Naive thymus-derived CD4-positive, alpha-beta T cell (primary cell): ENCODE measurements at regions of chr16 and their contacts with region 1.

Region 1: DNA sequence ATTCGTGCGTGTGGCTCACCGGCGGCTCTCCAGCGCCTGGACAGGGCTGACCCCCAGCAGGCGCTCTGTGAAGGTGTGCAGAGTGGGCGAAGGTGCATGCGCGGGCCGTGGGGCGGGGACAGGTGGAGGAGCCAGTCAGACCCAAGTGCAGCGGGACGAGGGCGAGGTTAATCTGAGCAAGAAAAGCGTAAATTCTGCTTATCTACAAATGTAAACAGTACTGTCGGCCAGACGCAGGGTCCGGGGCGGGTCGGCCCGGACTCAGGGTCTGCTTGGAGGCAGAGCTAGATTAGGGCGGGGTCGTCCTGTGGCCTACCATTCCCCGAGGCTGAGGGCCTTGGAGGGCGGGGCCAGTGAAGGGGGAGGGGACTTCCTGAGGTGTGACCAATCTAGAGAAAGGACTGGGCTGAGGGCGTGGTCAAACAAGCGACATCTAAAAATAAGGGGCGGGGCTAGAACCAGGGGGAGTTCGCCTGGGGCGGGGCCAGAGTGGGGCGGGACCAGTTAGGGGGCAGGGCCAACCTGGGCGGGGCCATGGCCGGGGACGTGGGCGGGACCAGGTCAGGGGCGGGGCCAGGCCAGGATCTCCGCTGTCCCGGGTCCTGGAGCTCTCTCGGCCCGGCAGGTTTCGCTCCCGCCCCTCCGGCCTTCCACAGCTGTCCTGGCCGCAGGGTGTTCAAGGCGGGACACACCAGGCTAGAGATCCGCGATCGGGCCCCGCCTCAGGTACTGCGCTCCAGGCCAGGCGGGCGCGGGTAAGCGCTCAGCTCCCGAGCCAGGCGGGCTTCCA is at the start of gene SEC14L5:
- DNase-seq: peak; percentile 87 to 96 (median 89)
- ATAC-seq: peak; percentile 99
- H3K4me3 ChIP-seq: peak within 1 kb of the TSS; percentile 59
- H3K4me3 Mint-ChIP-seq: peak within 1 kb of the TSS; percentile 79 to 96 (median 89)
- H3K27ac ChIP-seq: peak within 1 kb of the TSS; percentile 26
- H3K27ac Mint-ChIP-seq: peak within 1 kb of the TSS in 6 of 9 donors; percentile 30 to 80 (median 53)
- H3K4me1 ChIP-seq: peaks cover 6 to 13% of the 10 kb centered on the region in 2 donors
- H3K4me1 Mint-ChIP-seq: peaks cover 15 to 30% (median 23%) of the 10 kb centered on the region in 7 donors
- H3K27me3 ChIP-seq: peaks cover 0 to 7% of the 10 kb centered on the region in 2 donors
- H3K27me3 Mint-ChIP-seq: peaks cover 10 to 35% (median 31%) of the 10 kb centered on the region in 5 donors
- total RNA-seq, gene SEC14L5: 0.21 to 1.0 TPM in 2 of 5 experiments, not detected in the others

Region 2: GRCh38 chr16:3961449-3961849 is 996.5 kb before region 1 on chr16:
- CTCF ChIA-PET with region 1: no interaction called
- POLR2A ChIA-PET with region 1: no interaction called
- intact Hi-C with region 1: loop called in 1 of 2 experiments (anchors 10 kb)
- DNase-seq: no peak
- ATAC-seq: no peak
- H3K4me3 ChIP-seq: no peak overlapping the region
- H3K4me3 Mint-ChIP-seq: peak overlapping the region in 7 of 10 donors; percentile 2 to 94 (median 74)
- H3K27ac ChIP-seq: no peak overlapping the region
- H3K27ac Mint-ChIP-seq: peak overlapping the region in 5 of 9 donors; percentile 66 to 98 (median 95)
- H3K4me1 ChIP-seq: peaks cover 15 to 23% of the 10 kb centered on the region in 2 donors
- H3K4me1 Mint-ChIP-seq: peaks cover 9 to 34% (median 24%) of the 10 kb centered on the region in 7 donors
- H3K27me3 ChIP-seq: peaks cover 0 to 2% of the 10 kb centered on the region in 2 donors
- H3K27me3 Mint-ChIP-seq: peaks cover 0 to 15% (median 5%) of the 10 kb centered on the region in 5 donors

Region 3: DNA sequence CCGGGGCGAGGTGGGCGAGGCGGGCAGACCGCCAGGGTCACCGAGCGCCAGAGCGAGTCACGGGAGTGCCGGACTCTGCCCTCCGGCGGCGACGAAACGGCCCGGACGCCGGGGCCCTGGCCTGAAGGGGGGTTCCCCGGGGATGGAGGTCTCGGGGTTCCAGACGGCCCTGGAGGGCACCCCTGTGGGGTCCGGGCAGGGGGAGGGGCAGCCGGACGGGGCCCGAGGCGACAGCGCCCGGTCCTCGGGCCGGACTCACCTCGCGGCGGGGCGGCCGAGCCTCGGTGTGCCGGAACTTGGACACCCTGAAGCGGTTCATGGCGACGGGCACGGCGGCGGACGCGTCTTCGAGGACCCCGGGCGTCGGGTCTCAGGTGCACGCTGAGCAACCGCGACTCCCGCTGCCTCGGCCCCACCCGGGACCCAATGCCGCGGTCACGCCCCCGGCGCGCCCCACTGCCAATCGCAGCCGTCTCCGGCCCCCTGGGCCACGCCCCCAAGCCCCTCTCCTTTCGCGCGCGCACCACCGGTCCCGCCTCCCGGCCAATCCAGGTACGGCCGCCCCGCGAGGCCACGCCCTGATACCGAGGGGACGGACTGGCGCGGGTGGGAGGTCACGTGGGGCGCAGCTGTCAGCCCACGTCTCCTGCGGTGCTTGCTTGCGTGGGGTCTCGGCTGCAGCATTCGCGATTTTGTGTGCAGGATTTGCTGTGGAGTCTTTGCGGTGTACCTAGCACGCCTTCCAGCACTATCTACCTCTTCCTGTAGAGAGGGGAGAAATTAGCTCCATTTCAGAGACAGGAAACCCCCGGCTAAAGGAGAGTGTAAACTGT is 541.5 kb before region 1 on chr16 and contains the start of gene CORO7:
- CTCF ChIA-PET with region 1: no interaction called
- POLR2A ChIA-PET with region 1: no interaction called
- intact Hi-C with region 1: loop called (anchors 5 to 10 kb)
- DNase-seq: peak; percentile 98 to 100 (median 99)
- ATAC-seq: peak; percentile 89
- H3K4me3 ChIP-seq: peak within 1 kb of the TSS; percentile 71
- H3K4me3 Mint-ChIP-seq: peak within 1 kb of the TSS; percentile 88 to 98 (median 95)
- H3K27ac ChIP-seq: peak within 1 kb of the TSS; percentile 98
- H3K27ac Mint-ChIP-seq: peak within 1 kb of the TSS; percentile 91 to 99 (median 98)
- H3K4me1 ChIP-seq: peaks cover 26 to 33% of the 10 kb centered on the region in 2 donors
- H3K4me1 Mint-ChIP-seq: peaks cover 18 to 43% (median 38%) of the 10 kb centered on the region in 7 donors
- H3K27me3 ChIP-seq: no peaks in the 10 kb centered on the region
- H3K27me3 Mint-ChIP-seq: peaks cover 0 to 9% (median 0%) of the 10 kb centered on the region in 5 donors
- total RNA-seq, gene CORO7: 114 to 572 (median 165) TPM

Region 4: DNA sequence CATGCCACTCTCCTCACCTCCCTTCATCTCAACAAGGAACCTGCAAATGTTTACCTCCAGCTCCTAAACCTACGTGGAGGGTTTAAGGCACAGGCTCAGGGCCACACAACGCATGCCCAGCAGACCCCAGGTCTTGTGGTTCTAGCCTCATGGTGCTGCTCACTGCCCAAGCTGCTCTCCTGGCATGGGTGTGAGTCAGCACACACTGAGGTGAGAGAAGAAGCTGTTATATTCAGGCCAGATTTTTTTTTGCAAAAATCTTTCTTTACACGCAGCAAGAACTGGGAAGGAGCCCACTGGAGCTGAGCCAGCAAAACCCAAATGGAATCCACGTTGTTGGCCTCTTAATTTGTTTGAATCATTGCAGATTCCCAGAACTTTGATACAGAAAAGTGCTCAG is 407.3 kb before region 1 on chr16:
- CTCF ChIA-PET with region 1: no interaction called
- POLR2A ChIA-PET with region 1: no interaction called
- intact Hi-C with region 1: loop called in 1 of 2 experiments (anchors 1 kb)
- DNase-seq: no peak
- ATAC-seq: no peak
- H3K4me3 ChIP-seq: no peak overlapping the region
- H3K4me3 Mint-ChIP-seq: no peak overlapping the region
- H3K27ac ChIP-seq: no peak overlapping the region
- H3K27ac Mint-ChIP-seq: peak overlapping the region in 1 of 9 donors; percentile 36
- H3K4me1 ChIP-seq: peaks cover 0 to 7% of the 10 kb centered on the region in 2 donors
- H3K4me1 Mint-ChIP-seq: peaks cover 0 to 10% (median 5%) of the 10 kb centered on the region in 7 donors
- H3K27me3 ChIP-seq: no peaks in the 10 kb centered on the region
- H3K27me3 Mint-ChIP-seq: peaks cover 0 to 6% (median 0%) of the 10 kb centered on the region in 5 donors

Region 5: DNA sequence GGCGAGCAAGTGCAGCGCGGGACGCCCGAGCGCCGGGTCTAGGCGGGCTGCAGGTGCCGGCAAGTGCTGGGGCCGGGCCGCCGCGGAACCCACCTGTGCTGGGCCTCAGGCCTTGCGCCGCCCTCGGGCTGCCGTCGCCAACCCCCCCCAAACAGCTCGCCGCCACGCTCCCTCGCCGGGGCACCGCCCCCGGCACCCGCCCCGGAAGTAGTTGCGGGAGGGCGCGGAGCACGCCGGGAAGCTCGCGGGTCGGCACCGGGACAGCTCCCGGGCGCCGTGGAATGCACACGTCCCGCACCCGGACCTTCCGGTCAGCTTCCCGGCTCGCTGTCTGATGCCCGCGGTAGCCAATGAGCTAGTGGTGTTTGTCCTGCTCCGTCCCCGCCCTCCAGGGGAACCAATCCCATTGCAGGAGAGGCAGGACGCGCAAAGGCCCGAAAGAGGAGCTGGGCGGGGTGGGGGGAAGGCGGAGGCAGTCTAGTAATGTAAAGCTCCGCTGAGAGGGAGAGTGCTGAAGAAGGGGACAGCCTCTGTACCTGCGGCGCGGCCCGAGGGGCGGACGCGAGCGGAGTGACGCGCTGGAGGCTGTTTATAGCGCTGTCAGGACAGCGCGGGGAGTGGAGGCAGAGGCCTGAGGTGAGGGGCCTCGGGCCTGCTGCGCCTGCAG is 223.7 kb before region 1 on chr16 and contains the starts of genes ANKS3 and DNAAF8:
- CTCF ChIA-PET with region 1: no interaction called
- POLR2A ChIA-PET with region 1: no interaction called
- intact Hi-C with region 1: loop called in 1 of 2 experiments (anchors 1 kb)
- DNase-seq: peak; percentile 72 to 90 (median 79)
- ATAC-seq: peak; percentile 86
- H3K4me3 ChIP-seq: peak within 1 kb of the TSS; percentile 98
- H3K4me3 Mint-ChIP-seq: peak within 1 kb of the TSS; percentile 84 to 96 (median 92)
- H3K27ac ChIP-seq: peak within 1 kb of the TSS; percentile 79
- H3K27ac Mint-ChIP-seq: peak within 1 kb of the TSS; percentile 73 to 92 (median 90)
- H3K4me1 ChIP-seq: peaks cover 6 to 9% of the 10 kb centered on the region in 2 donors
- H3K4me1 Mint-ChIP-seq: peaks cover 9 to 32% (median 20%) of the 10 kb centered on the region in 7 donors
- H3K27me3 ChIP-seq: no peaks in the 10 kb centered on the region
- H3K27me3 Mint-ChIP-seq: peaks cover 0 to 3% (median 0%) of the 10 kb centered on the region in 5 donors
- total RNA-seq, gene ANKS3: 17.6 to 32.7 (median 25.3) TPM
- total RNA-seq, gene DNAAF8: 0.11 to 0.57 (median 0.27) TPM

Region 6: DNA sequence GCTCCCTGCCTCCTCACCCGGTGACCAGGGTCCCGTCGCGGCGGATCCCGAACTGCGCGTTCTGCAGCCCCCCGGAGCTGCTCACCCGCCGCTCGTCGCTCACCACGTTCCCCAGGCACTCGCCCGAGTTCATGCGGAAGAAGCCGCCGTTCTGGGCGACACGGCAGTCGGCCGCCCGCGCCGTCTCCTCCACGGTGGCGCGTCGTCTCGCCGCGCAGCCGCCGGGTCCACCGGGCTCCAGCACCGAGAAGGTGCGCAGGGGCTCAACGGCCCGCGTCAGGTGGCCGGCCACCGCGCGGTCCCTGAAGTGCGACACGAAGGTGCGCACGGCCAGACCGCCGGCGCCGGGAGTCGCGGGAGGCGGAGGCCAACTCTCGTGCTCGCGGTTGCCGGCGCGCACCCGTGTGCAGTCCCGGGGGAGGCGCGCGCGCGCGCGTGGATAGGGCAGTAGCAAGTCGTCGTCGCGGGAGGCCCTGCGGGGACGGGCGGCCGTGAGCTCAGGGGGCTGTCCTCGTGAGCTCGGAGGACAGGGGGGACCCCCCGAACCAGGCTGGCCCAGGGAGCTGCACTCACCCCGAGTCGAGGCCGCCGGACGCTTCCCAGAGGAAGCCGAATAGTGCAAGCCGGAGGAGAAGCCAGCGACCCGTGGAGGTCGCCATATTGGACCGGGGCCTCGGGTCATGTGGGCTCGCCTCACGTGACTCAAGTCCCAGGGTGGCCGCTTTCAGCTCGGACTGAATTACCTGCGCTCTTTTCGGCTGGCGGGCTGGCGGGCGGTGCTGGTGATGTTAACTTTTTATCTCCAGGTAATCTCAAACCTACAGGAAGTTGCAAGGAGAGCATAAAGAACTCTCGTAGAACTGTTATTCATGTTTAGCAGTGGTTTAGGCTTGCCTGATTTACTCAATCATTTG is 75.6 kb after region 1 on chr16 and contains the start of gene NAGPA:
- CTCF ChIA-PET with region 1: interaction called, 3 read pairs
- POLR2A ChIA-PET with region 1: no interaction called
- intact Hi-C with region 1: loop called in 1 of 2 experiments (anchors 1 kb)
- DNase-seq: peak; percentile 68 to 91 (median 87)
- ATAC-seq: peak; percentile 93
- H3K4me3 ChIP-seq: peak within 1 kb of the TSS; percentile 80
- H3K4me3 Mint-ChIP-seq: peak within 1 kb of the TSS; percentile 73 to 94 (median 90)
- H3K27ac ChIP-seq: peak within 1 kb of the TSS; percentile 70
- H3K27ac Mint-ChIP-seq: peak within 1 kb of the TSS; percentile 68 to 95 (median 91)
- H3K4me1 ChIP-seq: peaks cover 17 to 18% of the 10 kb centered on the region in 2 donors
- H3K4me1 Mint-ChIP-seq: peaks cover 17 to 33% (median 23%) of the 10 kb centered on the region in 7 donors
- H3K27me3 ChIP-seq: no peaks in the 10 kb centered on the region
- H3K27me3 Mint-ChIP-seq: no peaks in the 10 kb centered on the region
- total RNA-seq, gene NAGPA: 17.8 to 39.5 (median 34.1) TPM

Region 7: DNA sequence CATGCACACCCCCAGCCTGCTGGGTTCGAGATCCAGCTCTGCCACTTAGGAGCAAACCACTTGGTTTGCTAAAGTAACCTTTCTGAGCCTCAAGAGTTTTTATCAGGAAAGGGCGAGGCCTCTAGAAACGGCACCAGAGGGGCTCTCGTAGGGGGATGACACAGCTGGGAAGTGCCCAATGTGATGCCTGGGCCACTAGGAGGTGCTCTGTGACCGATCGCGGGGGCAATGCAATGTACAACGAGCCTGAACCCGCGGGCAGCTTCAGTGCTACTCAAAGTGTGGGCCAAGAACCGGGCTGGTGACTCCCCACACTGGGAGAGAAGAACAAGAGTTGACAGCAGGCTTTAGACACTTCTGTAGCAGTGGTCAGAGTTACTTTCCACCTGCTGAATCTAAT is 98.4 kb after region 1 on chr16:
- CTCF ChIA-PET with region 1: no interaction called
- POLR2A ChIA-PET with region 1: no interaction called
- intact Hi-C with region 1: no loop called
- DNase-seq: peak in 5 of 9 donors; percentile 19 to 33 (median 27)
- ATAC-seq: peak; percentile 77
- H3K4me3 ChIP-seq: no peak overlapping the region
- H3K4me3 Mint-ChIP-seq: no peak overlapping the region
- H3K27ac ChIP-seq: no peak overlapping the region
- H3K27ac Mint-ChIP-seq: no peak overlapping the region
- H3K4me1 ChIP-seq: no peaks in the 10 kb centered on the region
- H3K4me1 Mint-ChIP-seq: peaks cover 0 to 4% (median 0%) of the 10 kb centered on the region in 7 donors
- H3K27me3 ChIP-seq: no peaks in the 10 kb centered on the region
- H3K27me3 Mint-ChIP-seq: peaks cover 0 to 1% (median 0%) of the 10 kb centered on the region in 5 donors